SK-N-SH (cell line): ENCODE measurements at regions of chr2 and their contacts with region 1.

Region 1: GRCh38 chr2:180980106-180980942 is at the start of gene UBE2E3:
- DNase-seq: peak; percentile 93
- H3K4me3 ChIP-seq: peak within 1 kb of the TSS; percentile 84 to 95
- H3K27ac ChIP-seq: peak within 1 kb of the TSS; percentile 67 to 85
- H3K4me1 ChIP-seq: peaks cover 5 to 22% of the 10 kb centered on the region in 2 experiments; a peak in 3 of 4 replicates
- H3K27me3 ChIP-seq: no peaks in the 10 kb centered on the region
- CTCF ChIP-seq: peak; percentile 58
- EP300 ChIP-seq: no peak
- RAD21 ChIP-seq: peak; percentile 59
- polyA plus RNA-seq, gene UBE2E3: 62.9 and 71.1 TPM in 2 replicates

Region 2: DNA sequence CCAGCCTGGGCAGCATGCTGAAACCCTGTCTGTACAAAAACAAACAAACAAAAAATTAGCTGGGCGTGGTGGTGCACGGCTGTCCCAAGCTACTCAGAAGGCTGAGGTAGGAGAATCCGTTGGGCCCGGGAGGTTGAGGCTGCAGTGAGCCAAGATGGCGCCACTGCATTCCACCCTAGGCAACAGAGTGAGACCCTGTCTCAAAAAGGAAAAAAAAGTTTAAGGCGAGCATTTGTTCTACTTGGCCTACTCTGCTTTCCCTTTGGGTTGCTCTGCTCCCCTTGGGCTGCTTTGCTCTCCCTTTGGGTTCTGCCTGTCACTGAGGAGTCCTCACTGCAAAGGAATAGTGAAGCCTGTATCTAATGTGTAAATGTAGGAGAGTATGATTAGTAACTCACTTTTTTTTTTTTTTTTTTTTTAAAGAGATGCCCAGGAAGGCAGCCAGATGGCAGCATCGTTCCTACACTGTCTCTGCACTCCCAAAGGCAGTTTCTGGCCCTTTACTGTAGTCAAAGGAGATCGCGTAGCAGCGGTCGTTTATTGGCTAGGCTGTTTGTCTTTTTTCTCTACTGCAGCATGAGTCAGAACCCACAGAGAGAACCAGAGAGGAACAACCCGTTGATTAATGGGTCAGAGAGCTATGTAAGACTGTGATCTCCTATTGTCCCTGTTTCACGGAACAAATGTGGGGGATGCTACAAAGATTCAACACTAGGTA is 854.9 kb before region 1 on chr2:
- CTCF ChIA-PET with region 1: interaction called, 50 read pairs
- POLR2A ChIA-PET with region 1: interaction called, 7 read pairs
- DNase-seq: peak; percentile 48
- H3K4me3 ChIP-seq: no peak overlapping the region; a peak in 1 of 4 replicates
- H3K27ac ChIP-seq: peak overlapping the region in 1 of 2 experiments; percentile 2; a peak in 1 of 4 replicates
- H3K4me1 ChIP-seq: peaks cover 2 to 3% of the 10 kb centered on the region in 2 experiments; a peak in 2 of 4 replicates
- H3K27me3 ChIP-seq: no peaks in the 10 kb centered on the region
- CTCF ChIP-seq: peak; percentile 70
- EP300 ChIP-seq: no peak; a peak in 1 of 4 replicates
- RAD21 ChIP-seq: peak; percentile 89

Region 3: DNA sequence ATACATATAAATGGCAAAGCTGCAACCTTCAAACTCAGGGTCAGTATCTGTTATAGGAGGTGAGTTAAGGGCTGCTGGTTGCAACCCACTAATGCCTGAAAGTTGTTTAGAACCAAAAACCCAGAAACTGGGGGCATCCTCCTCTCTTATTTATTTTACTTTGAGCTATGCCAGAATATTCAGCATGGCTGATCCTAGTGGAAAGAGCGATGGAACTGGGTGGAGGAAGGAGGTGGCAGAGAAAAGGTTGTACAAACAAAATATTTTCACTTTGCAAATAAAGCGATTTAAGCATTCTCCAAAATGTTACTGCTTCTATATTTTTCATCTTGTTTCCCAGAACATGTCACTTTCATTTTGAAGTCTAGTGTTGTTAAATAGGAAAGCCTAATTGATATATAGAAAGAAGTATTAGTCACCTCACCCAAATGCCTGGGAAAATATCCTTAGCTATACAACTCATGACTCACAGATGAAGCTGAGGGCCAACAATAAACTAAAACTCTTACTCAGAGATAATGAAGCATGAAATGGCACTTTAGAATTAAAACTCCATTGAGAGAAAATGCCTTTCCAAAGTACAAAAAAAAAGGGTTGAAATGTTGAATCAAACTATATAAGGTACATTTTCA is 251.3 kb before region 1 on chr2:
- CTCF ChIA-PET with region 1: no interaction called
- POLR2A ChIA-PET with region 1: no interaction called
- DNase-seq: no peak
- H3K4me3 ChIP-seq: no peak overlapping the region
- H3K27ac ChIP-seq: peak overlapping the region in 1 of 2 experiments; percentile 92; a peak in 2 of 4 replicates
- H3K4me1 ChIP-seq: no peaks in the 10 kb centered on the region; a peak in 1 of 4 replicates
- H3K27me3 ChIP-seq: no peaks in the 10 kb centered on the region
- CTCF ChIP-seq: no peak
- EP300 ChIP-seq: peak; percentile 22 to 38; a peak in 1 of 4 replicates
- RAD21 ChIP-seq: no peak

Region 4: GRCh38 chr2:180952082-180952481 is 28.2 kb before region 1 on chr2:
- CTCF ChIA-PET with region 1: no interaction called
- POLR2A ChIA-PET with region 1: no interaction called
- DNase-seq: no peak
- H3K4me3 ChIP-seq: no peak overlapping the region
- H3K27ac ChIP-seq: no peak overlapping the region
- H3K4me1 ChIP-seq: no peaks in the 10 kb centered on the region
- H3K27me3 ChIP-seq: no peaks in the 10 kb centered on the region
- CTCF ChIP-seq: no peak
- EP300 ChIP-seq: no peak
- RAD21 ChIP-seq: no peak

Region 5: DNA sequence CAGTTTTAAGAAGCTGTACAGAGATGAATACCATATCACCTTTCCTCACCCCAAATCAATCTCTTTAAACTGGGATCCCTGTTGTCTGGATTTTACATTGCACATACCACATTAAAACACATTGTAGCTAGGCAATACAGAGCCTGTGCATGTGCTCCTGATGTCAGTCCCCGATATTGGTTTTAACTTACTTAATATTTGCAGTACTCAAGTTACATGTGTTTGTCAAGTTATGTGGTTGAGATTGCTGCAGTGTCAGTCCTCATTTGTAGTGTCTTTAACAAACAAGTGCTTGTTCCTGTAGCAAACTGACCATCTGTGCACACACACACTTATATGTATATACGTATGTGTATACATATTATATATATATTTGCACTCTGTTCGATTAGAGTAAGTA is 10.3 kb before region 1 on chr2:
- CTCF ChIA-PET with region 1: interaction called, 16 read pairs
- POLR2A ChIA-PET with region 1: interaction called, 6 read pairs
- DNase-seq: no peak
- H3K4me3 ChIP-seq: no peak overlapping the region
- H3K27ac ChIP-seq: no peak overlapping the region
- H3K4me1 ChIP-seq: no peaks in the 10 kb centered on the region
- H3K27me3 ChIP-seq: no peaks in the 10 kb centered on the region
- CTCF ChIP-seq: no peak
- EP300 ChIP-seq: no peak
- RAD21 ChIP-seq: no peak

Region 6: GRCh38 chr2:181058378-181059269 is 78.3 kb after region 1 on chr2:
- CTCF ChIA-PET with region 1: interaction called, 15 read pairs
- POLR2A ChIA-PET with region 1: no interaction called
- DNase-seq: peak; percentile 3
- H3K4me3 ChIP-seq: no peak overlapping the region; a peak in 1 of 4 replicates
- H3K27ac ChIP-seq: no peak overlapping the region
- H3K4me1 ChIP-seq: no peaks in the 10 kb centered on the region
- H3K27me3 ChIP-seq: no peaks in the 10 kb centered on the region
- CTCF ChIP-seq: peak; percentile 60
- EP300 ChIP-seq: no peak
- RAD21 ChIP-seq: peak; percentile 73

Region 7: DNA sequence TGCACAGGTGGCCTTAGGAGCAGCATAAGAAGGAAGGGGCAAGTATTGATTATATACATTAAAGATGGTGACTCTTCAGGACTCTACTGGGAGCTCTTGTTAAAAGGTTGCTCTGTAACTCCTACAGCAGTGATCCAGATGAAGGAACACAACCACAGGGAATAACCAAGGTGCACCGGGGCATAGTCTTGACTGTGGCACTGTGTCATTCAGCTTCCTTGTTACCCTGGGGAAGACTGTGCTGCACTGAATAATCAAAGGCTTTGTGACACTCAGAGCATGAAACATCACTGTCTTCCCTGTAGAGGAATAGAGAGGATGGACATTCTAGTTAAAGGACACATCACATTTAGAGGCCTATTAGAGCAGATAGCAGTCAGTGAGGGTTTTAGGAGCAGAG is 105.4 kb after region 1 on chr2:
- CTCF ChIA-PET with region 1: no interaction called
- POLR2A ChIA-PET with region 1: no interaction called
- DNase-seq: no peak
- H3K4me3 ChIP-seq: no peak overlapping the region
- H3K27ac ChIP-seq: no peak overlapping the region
- H3K4me1 ChIP-seq: no peaks in the 10 kb centered on the region; a peak in 1 of 4 replicates
- H3K27me3 ChIP-seq: no peaks in the 10 kb centered on the region
- CTCF ChIP-seq: no peak
- EP300 ChIP-seq: no peak
- RAD21 ChIP-seq: no peak